ENCODE measurements at regions of chr19 and their contacts with region 1.

Region 1: DNA sequence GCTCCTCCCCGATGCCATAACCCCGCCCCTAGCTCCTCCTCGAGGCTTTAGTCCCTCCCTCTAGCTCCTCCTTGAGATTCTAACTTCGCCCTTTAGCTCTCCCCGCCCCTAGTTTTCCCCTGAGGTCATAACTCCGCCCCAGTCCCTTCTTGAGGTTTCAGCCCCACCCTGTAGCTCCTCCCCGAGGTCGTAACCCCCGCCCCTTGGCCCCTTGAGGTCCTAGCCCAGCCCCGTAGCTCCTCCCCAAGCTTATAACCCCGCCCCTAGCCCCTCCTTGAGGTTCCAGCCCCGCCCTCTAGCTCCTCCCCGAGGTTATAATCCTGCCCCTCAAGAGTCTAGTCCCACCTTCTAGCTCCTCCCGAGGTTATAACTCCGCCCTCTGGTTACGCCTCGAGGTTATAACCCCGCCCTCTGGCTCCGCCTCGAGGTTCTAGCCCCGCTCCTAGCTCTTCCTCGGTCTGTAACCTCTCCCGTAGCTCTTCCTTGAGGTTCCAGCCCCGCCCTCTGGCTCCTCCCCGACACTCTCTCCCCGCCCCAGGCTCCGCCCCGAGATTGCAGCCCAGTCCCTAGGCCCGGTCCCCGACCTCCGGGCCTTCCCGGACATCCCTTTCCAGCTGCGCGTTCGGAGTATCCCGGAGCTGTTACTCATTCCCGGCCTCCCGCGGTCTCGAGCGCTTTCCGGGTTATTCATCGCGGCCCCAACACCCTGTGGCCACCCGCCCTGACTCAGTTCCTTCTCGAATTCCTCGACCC is 1.4 kb downstream of the PLAUR start:
- DNase-seq: peak; percentile 99
- ATAC-seq: peak; percentile 89
- H3K4me3 Mint-ChIP-seq: peak overlapping the region; percentile 89
- H3K27ac Mint-ChIP-seq: peak overlapping the region; percentile 91
- H3K4me1 Mint-ChIP-seq: peaks cover 31% of the 10 kb centered on the region
- H3K27me3 Mint-ChIP-seq: peaks cover 31% of the 10 kb centered on the region
- CTCF ChIP-seq: no peak

Region 2: DNA sequence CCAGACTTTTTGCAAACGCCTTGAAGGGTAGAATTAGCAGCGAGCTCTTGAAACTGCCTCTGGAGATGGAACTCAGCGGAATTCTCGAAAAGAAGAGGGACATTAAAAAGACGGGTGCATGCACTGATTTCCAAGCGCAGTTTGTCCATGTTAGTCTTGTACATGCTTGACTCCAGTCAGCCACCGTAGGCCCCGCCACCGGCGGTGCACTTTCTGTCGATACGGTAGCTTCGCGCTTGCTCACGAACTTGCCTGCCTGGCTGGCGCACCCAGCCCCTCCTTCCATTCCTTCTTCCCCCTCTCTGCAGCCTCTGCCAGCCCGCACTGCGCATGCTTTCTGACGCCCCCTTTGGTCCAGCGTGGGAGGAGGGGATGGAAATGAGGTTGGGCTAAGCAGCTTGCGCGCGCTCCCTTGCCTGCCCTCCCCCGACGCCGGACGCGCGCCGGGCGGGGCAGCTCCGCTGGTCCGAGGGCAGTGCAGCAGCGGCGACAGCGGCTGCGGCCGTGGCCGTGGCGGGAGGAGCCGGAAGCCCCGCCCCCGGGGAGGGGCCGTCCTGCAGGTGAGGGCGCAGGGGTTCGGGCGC is 135.5 kb before region 1 on chr19 and contains the start of gene ZNF575:
- CTCF ChIA-PET with region 1: interaction called, 28 read pairs
- POLR2A ChIA-PET with region 1: interaction called, 7 read pairs
- DNase-seq: peak; percentile 96
- ATAC-seq: peak; percentile 68
- H3K4me3 Mint-ChIP-seq: peak within 1 kb of the TSS; percentile 95
- H3K27ac Mint-ChIP-seq: peak within 1 kb of the TSS; percentile 100
- H3K4me1 Mint-ChIP-seq: peaks cover 18% of the 10 kb centered on the region
- H3K27me3 Mint-ChIP-seq: peaks cover 25% of the 10 kb centered on the region
- CTCF ChIP-seq: peak; percentile 16; the same call in 1 of the 2 replicates
- total RNA-seq, gene ZNF575: 0.13 to 0.25 TPM in 2 of 3 replicates, not detected in the other

Region 3: DNA sequence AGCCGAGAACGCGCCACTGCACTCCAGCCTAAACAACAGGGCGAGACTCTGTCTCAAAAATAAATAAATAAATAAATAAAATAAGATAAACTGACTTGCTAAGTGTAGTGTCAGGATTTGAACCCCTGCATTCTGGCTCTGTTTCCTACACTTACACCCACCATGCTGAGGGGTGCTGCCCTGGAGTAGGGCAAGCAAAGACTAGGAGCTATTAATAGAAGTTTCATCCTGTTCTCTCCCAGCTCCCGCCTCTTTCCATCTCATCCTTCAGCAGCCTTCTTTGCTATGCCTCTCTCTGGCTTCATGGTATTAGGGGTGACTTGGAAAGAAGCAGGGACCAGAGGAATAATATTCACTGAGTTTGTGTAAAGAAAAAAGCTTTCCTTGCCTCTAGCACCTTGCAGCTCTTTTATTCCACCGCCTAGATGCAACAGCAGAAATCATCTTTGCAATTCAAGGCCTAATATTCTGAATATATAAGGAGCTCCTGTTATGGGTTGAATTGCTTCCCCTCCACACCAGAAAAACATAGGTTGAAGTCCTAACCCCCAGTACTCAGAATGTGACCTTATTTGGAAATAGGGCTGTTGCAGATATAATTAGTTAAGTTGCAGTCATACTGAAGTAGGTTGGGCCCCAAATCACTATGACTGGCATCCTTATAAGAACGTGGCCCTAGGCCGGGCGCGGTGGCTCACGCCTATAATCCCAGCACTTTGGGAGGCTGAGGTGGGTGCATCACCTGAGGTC is 10.1 kb after region 1 on chr19:
- CTCF ChIA-PET with region 1: interaction called, 11 read pairs
- POLR2A ChIA-PET with region 1: no interaction called
- DNase-seq: no peak
- ATAC-seq: no peak
- H3K4me3 Mint-ChIP-seq: no peak overlapping the region
- H3K27ac Mint-ChIP-seq: no peak overlapping the region
- H3K4me1 Mint-ChIP-seq: peaks cover 8% of the 10 kb centered on the region
- H3K27me3 Mint-ChIP-seq: no peaks in the 10 kb centered on the region
- CTCF ChIP-seq: no peak

Region 4: GRCh38 chr19:43726736-43727592 is 58.4 kb after region 1 on chr19:
- CTCF ChIA-PET with region 1: interaction called, 17 read pairs
- POLR2A ChIA-PET with region 1: interaction called, 3 read pairs
- DNase-seq: no peak
- ATAC-seq: no peak
- H3K4me3 Mint-ChIP-seq: no peak overlapping the region
- H3K27ac Mint-ChIP-seq: no peak overlapping the region
- H3K4me1 Mint-ChIP-seq: no peaks in the 10 kb centered on the region
- H3K27me3 Mint-ChIP-seq: no peaks in the 10 kb centered on the region
- CTCF ChIP-seq: no peak

Region 5: DNA sequence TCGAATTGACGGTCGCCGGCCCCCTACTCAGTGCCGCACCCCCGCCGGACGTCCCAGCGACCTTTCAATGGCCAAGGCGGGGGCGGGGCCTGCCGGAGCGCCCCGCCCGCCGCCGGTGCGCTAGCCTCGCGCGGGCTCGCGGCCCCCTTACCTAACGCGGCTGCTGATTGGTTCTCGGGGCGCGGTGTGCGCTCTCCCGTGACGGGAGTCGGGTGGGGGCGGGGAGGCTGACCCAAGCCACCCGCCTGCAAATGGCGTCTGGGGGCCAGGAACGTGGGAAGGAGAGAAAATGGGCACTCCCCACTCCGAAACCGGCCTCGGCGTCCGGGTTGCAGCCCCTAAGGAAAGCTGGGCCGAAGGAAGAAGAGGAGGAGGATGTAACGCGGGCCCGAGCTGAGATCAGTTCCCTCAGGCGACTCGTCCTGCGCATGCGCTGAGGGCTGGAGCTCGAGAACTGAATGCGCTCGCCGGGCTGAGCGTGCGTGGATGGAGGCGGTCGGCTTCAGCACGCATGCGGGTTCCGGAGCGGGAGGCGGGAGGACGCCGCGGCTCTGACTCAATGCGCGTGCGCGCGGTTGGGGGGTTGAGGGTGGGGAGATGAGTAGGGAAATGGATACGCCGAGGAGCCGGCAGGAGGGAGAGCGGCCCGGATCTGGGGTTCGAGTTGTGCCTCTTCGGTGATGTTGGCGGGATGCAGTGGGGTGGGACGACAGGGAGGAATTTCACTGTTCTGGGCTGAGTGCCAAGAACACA is 86.1 kb after region 1 on chr19 and contains the start of gene SMG9:
- CTCF ChIA-PET with region 1: interaction called, 11 read pairs
- POLR2A ChIA-PET with region 1: interaction called, 3 read pairs
- DNase-seq: peak; percentile 97
- ATAC-seq: peak; percentile 87
- H3K4me3 Mint-ChIP-seq: peak within 1 kb of the TSS; percentile 96
- H3K27ac Mint-ChIP-seq: peak within 1 kb of the TSS; percentile 99
- H3K4me1 Mint-ChIP-seq: peaks cover 30% of the 10 kb centered on the region
- H3K27me3 Mint-ChIP-seq: no peaks in the 10 kb centered on the region
- CTCF ChIP-seq: no peak
- total RNA-seq, gene SMG9: 25.7 to 39.6 TPM (median 34.3 TPM) in 3 replicates